ENCODE measurements at regions of chr4 and their contacts with region 1.

Region 1: DNA sequence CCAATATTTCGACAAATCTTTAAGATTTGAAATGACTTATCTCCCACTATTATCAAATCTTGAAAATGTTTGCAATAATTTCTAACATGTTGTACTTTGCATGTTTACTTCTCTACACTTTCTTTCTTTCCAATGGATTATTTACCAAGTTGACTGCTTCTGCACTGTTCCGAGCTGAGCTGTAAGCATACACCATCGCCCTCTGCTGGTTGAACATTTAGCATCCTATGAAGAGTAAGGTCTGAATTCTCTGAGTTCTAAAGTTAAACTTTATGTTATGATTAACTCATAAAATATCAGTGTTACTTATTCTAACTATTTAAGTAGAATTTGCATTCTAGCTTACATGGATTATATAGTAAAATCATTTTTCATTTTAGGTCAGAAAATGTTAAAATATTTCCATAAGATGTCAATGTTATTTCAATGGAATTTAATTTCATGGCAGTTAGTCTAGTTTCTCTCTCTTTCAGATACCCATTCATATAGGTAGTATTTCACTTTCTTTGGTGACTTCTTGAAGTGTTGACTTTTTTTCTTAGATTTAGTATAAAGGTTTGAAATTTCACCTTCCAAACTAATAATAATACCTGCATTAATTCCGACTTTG is 137.4 kb downstream of the DKK2 start:
- DNase-seq: peak; percentile 38 to 57
- H3K4me3 ChIP-seq: no peak overlapping the region
- H3K4me3 Mint-ChIP-seq: no peak overlapping the region
- H3K27ac Mint-ChIP-seq: no peak overlapping the region
- H3K4me1 ChIP-seq: no peaks in the 10 kb centered on the region
- H3K4me1 Mint-ChIP-seq: peaks cover 6% of the 10 kb centered on the region
- H3K27me3 ChIP-seq: no peaks in the 10 kb centered on the region
- H3K27me3 Mint-ChIP-seq: peaks cover 4% of the 10 kb centered on the region
- CTCF ChIP-seq: peak; percentile 67 to 68

Region 2: GRCh38 chr4:106522839-106523238 is 375.9 kb before region 1 on chr4:
- CTCF ChIA-PET with region 1: no interaction called
- POLR2A ChIA-PET with region 1: no interaction called
- intact Hi-C with region 1: loop called (anchors 10 kb)
- DNase-seq: peak; percentile 43 to 54
- H3K4me3 ChIP-seq: no peak overlapping the region
- H3K4me3 Mint-ChIP-seq: no peak overlapping the region
- H3K27ac Mint-ChIP-seq: no peak overlapping the region
- H3K4me1 ChIP-seq: no peaks in the 10 kb centered on the region
- H3K4me1 Mint-ChIP-seq: no peaks in the 10 kb centered on the region
- H3K27me3 ChIP-seq: no peaks in the 10 kb centered on the region
- H3K27me3 Mint-ChIP-seq: no peaks in the 10 kb centered on the region
- CTCF ChIP-seq: peak; percentile 23 to 37

Region 3: GRCh38 chr4:106875340-106875739 is 23.4 kb before region 1 on chr4:
- CTCF ChIA-PET with region 1: no interaction called
- POLR2A ChIA-PET with region 1: no interaction called
- intact Hi-C with region 1: no loop called
- DNase-seq: no peak
- H3K4me3 ChIP-seq: no peak overlapping the region
- H3K4me3 Mint-ChIP-seq: no peak overlapping the region
- H3K27ac Mint-ChIP-seq: no peak overlapping the region
- H3K4me1 ChIP-seq: no peaks in the 10 kb centered on the region
- H3K4me1 Mint-ChIP-seq: no peaks in the 10 kb centered on the region
- H3K27me3 ChIP-seq: no peaks in the 10 kb centered on the region
- H3K27me3 Mint-ChIP-seq: peaks cover 5% of the 10 kb centered on the region
- CTCF ChIP-seq: no peak